GM10248 (cell line): ENCODE measurements at regions of chr16 and their contacts with region 1.

Region 1: GRCh38 chr16:10918294-10919002 is 23.8 kb downstream of the DEXI start:
- DNase-seq: peak; percentile 81
- CTCF ChIP-seq: peak; percentile 86

Region 2: DNA sequence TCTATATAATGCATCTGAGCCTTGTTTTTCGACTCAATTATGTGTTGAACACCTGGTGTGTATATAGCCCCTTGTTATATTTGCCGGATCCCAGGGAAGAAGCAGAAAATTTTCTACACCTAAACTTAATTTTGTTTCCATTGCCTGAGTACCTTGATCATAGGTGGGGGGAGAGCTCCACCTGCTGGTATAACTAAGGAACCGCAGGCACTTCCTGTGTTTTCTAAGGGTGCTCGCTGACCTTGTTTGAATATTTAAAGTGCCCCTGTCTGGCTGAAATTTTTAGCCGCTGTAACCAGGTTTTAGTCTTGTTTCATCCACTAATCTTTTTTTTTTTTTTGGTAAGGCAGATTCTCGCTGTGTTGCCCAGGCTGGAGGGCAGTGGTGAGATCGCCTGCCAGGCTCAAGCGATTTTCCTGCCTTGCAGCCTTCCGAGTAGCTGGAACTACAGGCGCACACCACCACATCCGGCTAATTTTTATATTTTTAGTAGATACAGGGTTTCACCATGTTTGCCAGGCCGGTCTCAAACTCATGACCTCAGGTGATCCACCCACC is 181.3 kb before region 1 on chr16:
- CTCF ChIA-PET with region 1: interaction called, 13 read pairs
- POLR2A ChIA-PET with region 1: no interaction called
- DNase-seq: peak; percentile 81
- CTCF ChIP-seq: peak; percentile 84

Region 3: GRCh38 chr16:10820546-10820945 is 97.9 kb before region 1 on chr16:
- CTCF ChIA-PET with region 1: interaction called, 13 read pairs
- POLR2A ChIA-PET with region 1: no interaction called
- DNase-seq: no peak
- CTCF ChIP-seq: no peak

Region 4: DNA sequence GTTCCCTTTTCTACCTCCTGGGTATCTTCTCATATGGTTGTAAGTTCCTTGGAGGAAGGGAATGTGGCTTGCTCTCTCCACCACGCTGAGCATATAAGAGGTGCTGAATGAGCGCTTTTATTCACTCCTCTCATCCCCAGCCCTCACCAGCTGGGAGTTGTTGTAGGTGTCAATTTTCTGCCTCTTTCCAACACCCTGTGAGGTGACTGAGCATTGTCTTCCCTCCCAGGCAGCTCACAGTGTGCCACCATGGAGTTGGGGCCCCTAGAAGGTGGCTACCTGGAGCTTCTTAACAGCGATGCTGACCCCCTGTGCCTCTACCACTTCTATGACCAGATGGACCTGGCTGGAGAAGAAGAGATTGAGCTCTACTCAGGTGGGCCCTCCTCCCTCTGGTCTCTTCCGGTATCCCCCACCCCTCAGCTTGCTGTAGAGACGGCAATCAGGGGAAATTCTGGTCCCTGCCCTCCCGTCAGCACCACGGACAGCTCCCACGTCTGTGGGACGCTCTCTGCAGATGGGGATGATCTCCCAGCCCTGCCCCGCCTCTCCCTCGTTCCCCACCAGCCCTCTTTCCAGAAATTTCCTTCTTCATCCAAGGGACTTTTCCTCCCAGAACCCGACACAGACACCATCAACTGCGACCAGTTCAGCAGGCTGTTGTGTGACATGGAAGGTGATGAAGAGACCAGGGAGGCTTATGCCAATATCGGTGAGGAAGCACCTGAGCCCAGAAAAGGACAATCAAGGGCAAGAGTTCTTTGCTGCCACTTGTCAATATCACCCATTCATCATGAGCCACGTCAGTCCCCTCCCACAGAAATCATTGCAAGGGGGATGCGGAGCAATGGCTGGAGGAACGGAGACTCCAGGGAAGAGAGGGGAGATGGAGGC is 23.1 kb before region 1 on chr16:
- CTCF ChIA-PET with region 1: interaction called, 11 read pairs
- POLR2A ChIA-PET with region 1: no interaction called
- DNase-seq: no peak
- CTCF ChIP-seq: no peak

Region 5: GRCh38 chr16:10937068-10937859 is 18.8 kb after region 1 on chr16:
- CTCF ChIA-PET with region 1: interaction called, 14 read pairs
- POLR2A ChIA-PET with region 1: interaction called, 8 read pairs
- DNase-seq: no peak
- CTCF ChIP-seq: no peak